Heart right ventricle (tissue), 16 donors: ENCODE measurements at regions of chr17 and their contacts with region 1.

Region 1: DNA sequence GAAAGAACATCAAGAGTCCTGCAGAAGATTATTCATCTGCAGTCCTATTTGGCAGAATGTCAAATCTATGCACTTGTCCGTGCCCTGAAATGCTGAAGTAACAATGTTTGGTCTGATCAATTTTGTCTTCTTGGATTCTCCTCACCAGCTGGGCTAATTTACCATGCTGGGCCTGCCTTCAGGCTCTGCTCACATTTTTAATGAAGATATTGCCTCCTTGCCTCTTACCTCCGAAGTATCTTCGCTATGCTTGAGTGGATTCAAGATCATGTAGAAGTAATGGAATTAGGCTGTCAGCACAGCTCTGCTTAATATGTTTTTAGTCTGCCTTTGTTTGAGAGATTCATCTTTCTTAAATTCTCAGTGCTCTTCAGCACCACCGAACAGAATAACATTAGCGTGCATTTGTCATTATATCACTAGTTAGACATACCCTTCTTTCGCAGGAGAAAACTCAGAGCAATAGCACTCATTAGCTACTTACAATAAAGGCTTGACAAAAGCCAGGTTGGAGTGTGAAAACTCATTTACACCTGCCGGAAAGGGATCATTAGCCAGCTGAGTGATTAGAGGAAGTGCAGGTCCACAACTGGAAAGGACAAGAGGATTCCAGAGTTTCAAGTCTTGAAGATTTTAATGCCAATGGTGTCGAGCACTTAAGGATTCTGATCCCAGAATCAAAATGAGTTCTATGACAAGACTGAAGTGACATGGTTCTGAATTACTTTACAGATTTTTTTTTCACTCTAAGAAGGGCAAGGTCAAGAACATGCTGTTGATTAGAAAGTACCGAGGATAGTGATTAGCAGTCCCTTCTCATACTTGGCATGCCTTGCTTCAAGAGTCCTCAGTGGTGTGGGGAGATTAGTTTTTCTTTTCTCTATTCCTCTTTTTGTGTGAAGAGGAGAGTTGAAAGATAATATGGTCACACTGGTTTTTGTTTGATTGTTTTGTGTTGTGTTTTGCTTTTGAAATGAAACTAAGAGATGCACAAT is 405.6 kb upstream of the TOM1L1 start:
- DNase-seq: no peak
- ATAC-seq: no peak
- H3K4me3 ChIP-seq: no peak overlapping the region
- H3K27ac ChIP-seq: no peak overlapping the region
- H3K4me1 ChIP-seq: no peaks in the 10 kb centered on the region
- H3K27me3 ChIP-seq: no peaks in the 10 kb centered on the region
- CTCF ChIP-seq: no peak

Region 2: DNA sequence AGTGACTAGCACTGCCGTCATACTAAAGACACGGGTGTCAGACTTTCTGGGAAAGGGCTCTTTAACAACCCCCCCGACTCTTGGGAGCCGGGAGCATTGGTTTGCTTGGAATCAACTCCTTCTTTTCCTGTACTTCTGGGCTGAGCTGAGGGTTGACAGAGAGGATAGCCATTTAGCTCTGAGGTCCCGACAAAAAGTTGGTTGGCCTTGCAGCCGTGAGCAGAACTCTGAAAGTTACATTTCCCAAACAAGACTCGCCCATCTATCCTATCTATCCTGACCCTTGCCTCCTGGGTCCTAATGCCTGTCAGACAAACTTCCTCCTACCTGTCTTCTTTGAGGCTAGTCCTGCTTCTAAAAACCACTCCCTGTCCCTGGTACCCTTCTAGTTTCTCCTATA is 55.2 kb before region 1 on chr17:
- intact Hi-C with region 1: loop called in 1 of 10 experiments (anchors 5 kb)
- DNase-seq: no peak
- ATAC-seq: no peak
- H3K4me3 ChIP-seq: no peak overlapping the region
- H3K27ac ChIP-seq: no peak overlapping the region
- H3K4me1 ChIP-seq: no peaks in the 10 kb centered on the region
- H3K27me3 ChIP-seq: no peaks in the 10 kb centered on the region
- CTCF ChIP-seq: no peak